ENCODE measurements at regions of chr22 and their contacts with region 1.

Region 1: GRCh38 chr22:49930739-49931412 is 12.4 kb downstream of the CRELD2 start:
- DNase-seq: peak; percentile 81
- H3K4me3 Mint-ChIP-seq: peak overlapping the region; percentile 58
- H3K27ac Mint-ChIP-seq: peak overlapping the region; percentile 79
- H3K4me1 Mint-ChIP-seq: peaks cover 33% of the 10 kb centered on the region
- H3K27me3 Mint-ChIP-seq: no peaks in the 10 kb centered on the region

Region 2: DNA sequence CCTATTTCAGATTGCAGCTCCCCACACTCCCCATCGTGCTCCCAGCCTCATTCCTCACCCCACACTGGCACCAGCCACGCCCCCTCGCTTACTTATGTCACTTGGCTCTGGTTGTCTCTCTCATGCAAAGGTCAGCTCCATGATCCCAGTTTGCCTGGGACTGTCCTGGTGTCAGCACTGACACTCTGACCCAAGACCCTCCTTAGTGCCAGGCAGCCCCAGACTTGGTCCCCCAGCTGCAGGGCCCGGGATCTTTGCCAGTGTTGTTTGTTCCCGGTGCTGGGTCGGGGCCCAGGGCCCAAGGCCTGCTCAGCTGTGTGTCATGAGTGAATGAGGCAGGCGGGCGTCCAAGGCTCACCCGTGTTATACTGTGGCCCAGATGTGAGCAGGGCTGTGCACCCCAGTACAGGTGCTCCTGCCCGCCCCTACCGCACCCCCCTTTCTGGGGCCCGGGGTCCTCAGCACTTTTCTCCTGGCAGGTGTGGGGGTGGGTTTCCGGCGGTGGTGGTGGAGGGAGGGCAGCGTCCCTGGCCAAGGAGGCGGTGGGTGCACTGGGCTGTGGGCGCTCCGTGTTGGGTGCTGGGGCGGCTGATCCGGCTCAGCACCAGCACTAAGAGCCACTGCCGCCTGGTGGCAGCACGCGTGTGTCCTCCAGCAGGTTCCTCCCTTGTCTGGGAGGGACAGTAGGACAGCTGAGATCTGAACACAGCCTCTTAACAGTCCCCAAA is 62.2 kb after region 1 on chr22:
- intact Hi-C with region 1: loop called (anchors 1 kb)
- DNase-seq: peak; percentile 90
- H3K4me3 Mint-ChIP-seq: no peak overlapping the region
- H3K27ac Mint-ChIP-seq: no peak overlapping the region
- H3K4me1 Mint-ChIP-seq: peaks cover 4% of the 10 kb centered on the region
- H3K27me3 Mint-ChIP-seq: peaks cover 8% of the 10 kb centered on the region

Region 3: DNA sequence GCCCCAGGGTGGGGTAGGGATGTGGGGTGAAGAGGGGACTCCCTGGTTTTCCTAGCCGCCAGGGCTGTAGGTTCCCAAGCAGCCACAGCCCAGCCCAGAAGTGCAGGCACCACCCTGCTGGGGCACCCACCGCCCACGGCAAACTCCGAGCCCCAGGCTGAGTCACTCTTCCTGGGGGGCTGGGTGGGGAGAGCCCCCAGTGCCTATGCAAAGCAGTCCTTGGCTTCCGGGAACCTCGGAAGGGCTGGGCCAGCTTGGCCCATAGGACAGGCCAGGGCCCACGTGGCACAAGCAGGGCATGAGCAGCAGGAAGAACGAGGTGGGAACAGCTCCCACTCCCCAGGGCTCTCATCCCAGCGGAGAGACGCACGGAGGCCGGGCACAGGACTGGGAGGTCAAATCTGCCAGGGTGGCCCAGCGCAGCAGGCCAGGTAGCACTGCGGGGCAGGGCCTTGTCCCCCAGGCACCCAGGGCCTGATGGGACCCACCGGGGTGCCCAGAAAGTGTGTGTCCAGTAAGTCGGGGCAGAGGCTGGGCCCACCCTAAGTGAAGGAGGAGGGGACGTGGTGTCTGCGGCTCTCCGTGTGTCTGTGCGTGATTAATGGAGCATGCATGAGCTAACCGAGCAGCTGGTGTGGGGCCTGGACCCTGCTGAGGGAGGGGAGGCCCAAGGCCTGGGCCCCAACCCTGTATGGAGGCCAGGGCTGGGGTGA is 86.3 kb after region 1 on chr22:
- intact Hi-C with region 1: loop called (anchors 5 kb)
- DNase-seq: no peak
- H3K4me3 Mint-ChIP-seq: peak overlapping the region; percentile 28
- H3K27ac Mint-ChIP-seq: peak overlapping the region; percentile 65
- H3K4me1 Mint-ChIP-seq: peaks cover 25% of the 10 kb centered on the region
- H3K27me3 Mint-ChIP-seq: peaks cover 11% of the 10 kb centered on the region

Region 4: GRCh38 chr22:50030297-50031188 is 99.7 kb after region 1 on chr22:
- intact Hi-C with region 1: loop called (anchors 1 kb)
- DNase-seq: peak; percentile 95
- H3K4me3 Mint-ChIP-seq: no peak overlapping the region
- H3K27ac Mint-ChIP-seq: no peak overlapping the region
- H3K4me1 Mint-ChIP-seq: peaks cover 11% of the 10 kb centered on the region
- H3K27me3 Mint-ChIP-seq: peaks cover 6% of the 10 kb centered on the region

Region 5: DNA sequence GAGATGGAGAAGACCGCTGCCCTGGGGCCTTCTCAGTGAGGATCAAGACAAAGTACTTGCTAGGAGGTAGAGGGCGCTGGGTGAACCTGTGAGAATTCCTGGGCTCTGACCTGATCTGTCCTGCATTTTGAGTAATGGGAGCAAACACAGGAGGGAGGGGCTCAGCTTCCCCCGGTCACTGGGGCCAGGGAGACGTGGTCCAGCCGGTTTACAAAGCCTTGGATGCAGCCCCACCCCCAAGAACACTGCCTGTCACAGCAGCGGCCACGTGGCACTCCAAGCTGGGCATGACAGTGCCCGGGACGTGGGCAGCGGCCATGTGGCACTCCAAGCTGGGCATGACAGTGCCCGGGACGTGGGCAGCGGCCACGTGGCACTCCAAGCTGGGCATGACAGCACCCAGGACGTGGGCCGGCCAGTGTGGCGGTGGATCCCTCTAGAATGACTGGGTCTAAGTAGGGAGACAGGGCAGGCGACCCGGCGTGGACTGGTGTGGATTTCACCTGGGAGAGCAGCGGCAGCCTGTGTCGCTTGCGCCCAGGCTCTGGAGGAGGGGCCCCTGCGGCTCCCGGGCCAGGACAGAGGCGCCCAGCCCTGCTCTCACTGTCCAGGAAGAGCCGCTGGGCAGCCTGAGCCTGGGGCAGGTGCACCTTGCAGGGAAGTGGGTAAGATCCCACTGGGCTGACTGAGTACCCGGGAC is 129.7 kb after region 1 on chr22:
- intact Hi-C with region 1: no loop called
- DNase-seq: no peak
- H3K4me3 Mint-ChIP-seq: no peak overlapping the region
- H3K27ac Mint-ChIP-seq: no peak overlapping the region
- H3K4me1 Mint-ChIP-seq: no peaks in the 10 kb centered on the region
- H3K27me3 Mint-ChIP-seq: peaks cover 22% of the 10 kb centered on the region

Region 6: DNA sequence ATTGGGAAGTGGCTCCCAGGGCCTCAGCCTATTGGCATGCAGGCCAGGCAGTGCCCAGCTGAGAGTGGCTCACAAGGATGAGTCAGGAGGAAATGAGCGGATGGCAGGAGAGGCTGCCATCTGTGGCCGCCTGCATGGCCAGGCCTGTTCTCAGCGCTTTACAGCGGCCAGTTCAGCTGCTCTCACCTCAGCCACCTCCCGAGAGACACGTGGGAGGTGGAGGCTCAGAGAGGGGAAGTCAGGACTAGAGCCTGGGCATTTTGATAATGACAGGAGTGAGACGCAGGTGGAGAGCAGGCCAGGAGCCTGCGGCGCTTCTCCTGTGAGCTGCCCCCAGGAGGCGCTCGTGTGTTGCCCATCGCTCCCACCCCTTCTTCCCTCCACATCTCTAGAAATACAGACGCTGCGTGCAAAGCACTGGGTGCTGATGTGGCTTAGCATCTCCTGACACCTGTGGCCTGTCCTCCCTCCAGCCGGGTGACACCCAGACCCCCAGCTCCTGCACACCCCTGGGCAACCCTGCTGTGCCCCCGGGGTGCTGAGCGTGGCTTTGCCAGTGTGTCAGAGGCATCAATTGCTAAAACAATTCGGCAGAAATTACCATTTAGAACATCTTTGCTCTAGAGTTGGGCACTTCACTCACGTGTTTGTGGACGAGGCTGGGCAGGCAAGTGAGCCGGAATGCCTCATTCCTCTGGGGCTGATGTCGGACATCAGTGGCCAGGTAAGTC is 218.3 kb after region 1 on chr22:
- intact Hi-C with region 1: loop called (anchors 5 kb)
- DNase-seq: peak; percentile 91
- H3K4me3 Mint-ChIP-seq: no peak overlapping the region
- H3K27ac Mint-ChIP-seq: no peak overlapping the region
- H3K4me1 Mint-ChIP-seq: peaks cover 2% of the 10 kb centered on the region
- H3K27me3 Mint-ChIP-seq: no peaks in the 10 kb centered on the region

Region 7: DNA sequence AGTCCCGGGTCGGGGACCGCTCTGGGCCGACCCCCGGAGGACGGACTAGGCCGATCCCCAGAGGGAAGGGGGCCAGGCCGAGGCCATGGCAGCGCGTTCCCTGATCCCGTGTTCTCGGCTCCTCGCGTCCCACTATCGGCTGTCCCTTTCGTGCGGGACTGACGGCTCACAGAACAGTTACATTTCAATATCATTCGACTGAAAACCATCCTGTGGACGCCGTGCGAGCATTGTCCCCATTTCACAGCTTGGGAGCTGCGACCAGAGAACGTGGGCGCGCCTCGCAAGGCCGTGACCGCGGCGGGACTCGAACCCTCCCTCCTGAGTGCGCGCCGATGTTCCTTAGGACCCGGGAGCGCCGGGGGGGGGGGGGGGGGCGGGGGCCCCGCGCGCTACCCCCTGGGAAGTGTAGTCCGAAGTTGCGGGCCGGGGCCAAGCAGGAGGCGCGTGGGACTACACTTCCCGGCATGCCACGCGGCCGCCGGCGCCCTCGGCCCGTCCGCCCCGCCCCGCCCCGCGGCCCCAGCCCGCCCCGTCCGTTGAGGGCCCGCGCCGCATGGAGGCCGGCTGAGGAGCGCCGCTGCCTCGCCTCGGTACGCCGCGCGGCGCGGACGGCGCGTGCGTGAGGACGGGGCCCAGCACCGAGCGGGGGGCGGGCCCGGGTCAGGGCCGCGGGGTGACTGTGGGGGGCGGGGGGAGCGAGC is 254.7 kb after region 1 on chr22 and contains the start of gene TRABD:
- intact Hi-C with region 1: loop called (anchors 5 kb)
- DNase-seq: peak; percentile 96
- H3K4me3 Mint-ChIP-seq: peak within 1 kb of the TSS; percentile 96
- H3K27ac Mint-ChIP-seq: peak within 1 kb of the TSS; percentile 92
- H3K4me1 Mint-ChIP-seq: peaks cover 19% of the 10 kb centered on the region
- H3K27me3 Mint-ChIP-seq: peaks cover 2% of the 10 kb centered on the region
- total RNA-seq, gene TRABD: 94.4 and 97.4 TPM in 2 replicates

Region 8: GRCh38 chr22:50200461-50201190 is 269.8 kb after region 1 on chr22 and contains the start of gene SELENOO:
- intact Hi-C with region 1: loop called (anchors 5 kb)
- DNase-seq: peak; percentile 97
- H3K4me3 Mint-ChIP-seq: peak within 1 kb of the TSS; percentile 84
- H3K27ac Mint-ChIP-seq: peak within 1 kb of the TSS; percentile 45
- H3K4me1 Mint-ChIP-seq: peaks cover 19% of the 10 kb centered on the region
- H3K27me3 Mint-ChIP-seq: no peaks in the 10 kb centered on the region
- total RNA-seq, gene SELENOO: 24.0 and 25.2 TPM in 2 replicates

Measured in activated CD4-positive, alpha-beta T cell treated with anti-CD3 and anti-CD28 coated beads, Interleukin-2, amount 10 ng/mL, durations not matched to agents 24 days and 14 days (primary cell).